ENCODE measurements at regions of chr3 and their contacts with region 1.

Region 1: DNA sequence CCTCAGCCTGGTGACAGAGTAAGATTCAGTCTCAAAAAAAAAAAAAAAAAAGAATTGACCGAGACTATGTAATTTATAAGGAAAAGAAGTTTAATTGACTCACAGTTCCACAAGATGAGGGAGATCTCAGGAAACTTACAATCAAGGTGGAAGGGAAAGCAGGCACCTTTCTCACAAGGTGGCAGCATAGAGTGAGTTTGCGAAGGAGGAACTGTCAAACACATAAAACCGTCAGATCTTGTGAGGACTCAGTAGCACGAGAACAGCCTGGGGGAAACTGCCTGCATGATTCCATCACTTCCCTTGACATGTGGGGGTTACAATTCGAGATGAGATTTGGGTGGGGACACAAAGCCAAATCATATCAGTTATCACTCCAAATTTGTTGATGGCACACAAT is 381.0 kb downstream of the EDEM1 start:
- DNase-seq: peak; percentile 34
- ATAC-seq: peak; percentile 84
- H3K4me3 ChIP-seq: no peak overlapping the region
- H3K27ac ChIP-seq: no peak overlapping the region
- H3K4me1 ChIP-seq: no peaks in the 10 kb centered on the region
- H3K27me3 ChIP-seq: peaks cover 3% of the 10 kb centered on the region; the same call in 1 of the 2 replicates
- CTCF ChIP-seq: peak; percentile 38 to 64 (median 53); a peak in 5 of 6 replicates
- POLR2A ChIP-seq: no peak
- RAD21 ChIP-seq: peak; percentile 75

Region 2: GRCh38 chr3:5675319-5675718 is 106.9 kb after region 1 on chr3:
- CTCF ChIA-PET with region 1: no interaction called
- POLR2A ChIA-PET with region 1: no interaction called
- RAD21 ChIA-PET with region 1: no interaction called
- intact Hi-C with region 1: no loop called
- DNase-seq: no peak
- ATAC-seq: no peak
- H3K4me3 ChIP-seq: no peak overlapping the region
- H3K27ac ChIP-seq: no peak overlapping the region
- H3K4me1 ChIP-seq: no peaks in the 10 kb centered on the region
- H3K27me3 ChIP-seq: no peaks in the 10 kb centered on the region
- CTCF ChIP-seq: no peak
- POLR2A ChIP-seq: no peak
- RAD21 ChIP-seq: no peak

Region 3: DNA sequence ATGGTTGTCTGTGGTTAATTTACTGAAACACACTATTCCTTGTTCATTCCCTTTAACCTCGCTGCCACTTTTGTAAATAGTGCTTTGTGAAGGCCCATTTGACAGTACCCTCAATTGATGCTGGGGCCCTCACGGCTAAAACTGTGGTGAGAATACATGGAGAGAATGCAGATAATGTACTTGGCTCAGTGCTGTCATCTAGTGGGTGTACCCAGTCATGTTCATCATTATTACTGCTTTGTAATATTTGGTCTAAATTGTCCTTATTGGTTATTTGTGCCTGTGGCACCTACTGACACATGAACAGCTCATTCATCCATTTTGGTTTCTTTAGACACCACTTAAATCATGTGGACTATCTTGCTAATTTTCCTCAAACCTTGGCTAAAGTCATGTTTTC is 162.6 kb after region 1 on chr3:
- CTCF ChIA-PET with region 1: no interaction called
- POLR2A ChIA-PET with region 1: no interaction called
- RAD21 ChIA-PET with region 1: no interaction called
- intact Hi-C with region 1: loop called (anchors 5 kb)
- DNase-seq: peak; percentile 12
- ATAC-seq: peak; percentile 73
- H3K4me3 ChIP-seq: no peak overlapping the region
- H3K27ac ChIP-seq: no peak overlapping the region
- H3K4me1 ChIP-seq: no peaks in the 10 kb centered on the region
- H3K27me3 ChIP-seq: no peaks in the 10 kb centered on the region
- CTCF ChIP-seq: peak; percentile 56 to 70 (median 61); a peak in 5 of 6 replicates
- POLR2A ChIP-seq: no peak
- RAD21 ChIP-seq: peak; percentile 81

Region 4: GRCh38 chr3:5791544-5791943 is 223.1 kb after region 1 on chr3:
- CTCF ChIA-PET with region 1: no interaction called
- POLR2A ChIA-PET with region 1: no interaction called
- RAD21 ChIA-PET with region 1: interaction called in 1 of 2 experiments, 4 read pairs
- intact Hi-C with region 1: loop called (anchors 10 kb)
- DNase-seq: no peak
- ATAC-seq: no peak
- H3K4me3 ChIP-seq: no peak overlapping the region
- H3K27ac ChIP-seq: no peak overlapping the region
- H3K4me1 ChIP-seq: peaks cover 0 to 10% of the 10 kb centered on the region in 2 experiments; a peak in 2 of 4 replicates
- H3K27me3 ChIP-seq: no peaks in the 10 kb centered on the region
- CTCF ChIP-seq: no peak
- POLR2A ChIP-seq: no peak
- RAD21 ChIP-seq: no peak

Measured in HCT116 (cell line).